ENCODE measurements at regions of chr10 and their contacts with region 1.

Region 1: DNA sequence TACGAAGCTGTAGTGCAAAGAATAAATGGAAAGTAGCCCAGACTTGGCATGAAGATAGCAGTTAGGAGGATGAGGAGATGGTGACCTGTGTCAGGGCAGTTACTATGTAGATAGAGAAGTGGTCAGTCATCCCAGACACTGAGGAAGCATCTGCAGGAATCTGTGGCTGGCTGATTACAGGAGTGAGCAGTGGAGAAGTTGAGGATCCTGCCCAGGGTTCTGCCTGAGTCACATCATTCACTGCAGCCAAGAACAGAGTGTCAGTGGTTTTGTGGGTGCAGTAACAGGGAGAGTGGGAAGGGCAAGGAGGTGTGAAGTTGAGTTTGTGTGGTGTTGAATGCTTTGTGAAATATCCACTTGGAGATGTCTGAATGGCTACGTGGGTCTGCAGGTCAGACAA is 676.4 kb upstream of the NRP1 start:
- DNase-seq: no peak
- H3K4me3 ChIP-seq: no peak overlapping the region
- H3K27ac ChIP-seq: no peak overlapping the region
- H3K4me1 ChIP-seq: no peaks in the 10 kb centered on the region
- H3K27me3 ChIP-seq: no peaks in the 10 kb centered on the region
- CTCF ChIP-seq: no peak
- POLR2A ChIP-seq: no peak

Region 2: GRCh38 chr10:33381451-33382242 is 629.2 kb before region 1 on chr10:
- intact Hi-C with region 1: no loop called
- DNase-seq: no peak
- H3K4me3 ChIP-seq: no peak overlapping the region
- H3K27ac ChIP-seq: no peak overlapping the region
- H3K4me1 ChIP-seq: no peaks in the 10 kb centered on the region
- H3K27me3 ChIP-seq: no peaks in the 10 kb centered on the region
- CTCF ChIP-seq: no peak
- POLR2A ChIP-seq: no peak

Region 3: DNA sequence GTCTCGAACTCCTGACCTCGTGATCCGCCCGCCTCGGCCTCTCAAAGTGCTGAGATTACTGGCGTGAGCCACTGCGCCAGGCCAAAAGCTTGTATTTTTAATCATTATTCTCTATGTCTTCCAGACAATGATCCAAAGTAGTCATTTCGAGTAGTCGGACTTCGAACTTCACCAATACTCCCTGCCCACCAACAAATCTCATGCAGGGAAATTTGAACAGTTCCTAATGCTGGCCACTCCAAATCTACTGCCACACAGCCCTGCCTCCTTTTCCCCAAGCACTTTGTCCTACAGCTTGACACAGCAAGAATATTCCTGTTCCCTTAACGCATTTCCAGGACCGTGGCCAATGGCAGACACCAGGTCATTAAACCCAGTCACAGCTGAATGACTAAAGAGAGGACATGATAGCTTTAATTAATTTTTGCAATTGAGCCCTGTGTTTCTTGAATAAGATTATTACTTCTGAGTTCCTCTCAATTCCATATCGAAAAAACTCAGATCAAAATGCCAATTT is 534.1 kb before region 1 on chr10:
- intact Hi-C with region 1: no loop called
- DNase-seq: no peak
- H3K4me3 ChIP-seq: no peak overlapping the region
- H3K27ac ChIP-seq: no peak overlapping the region
- H3K4me1 ChIP-seq: no peaks in the 10 kb centered on the region
- H3K27me3 ChIP-seq: no peaks in the 10 kb centered on the region
- CTCF ChIP-seq: no peak
- POLR2A ChIP-seq: no peak

Region 4: GRCh38 chr10:33653584-33654367 is 357.1 kb before region 1 on chr10:
- intact Hi-C with region 1: loop called (anchors 5 kb)
- DNase-seq: no peak
- H3K4me3 ChIP-seq: no peak overlapping the region
- H3K27ac ChIP-seq: no peak overlapping the region
- H3K4me1 ChIP-seq: no peaks in the 10 kb centered on the region
- H3K27me3 ChIP-seq: no peaks in the 10 kb centered on the region
- CTCF ChIP-seq: no peak
- POLR2A ChIP-seq: no peak

Region 5: GRCh38 chr10:34078745-34079470 is 68.0 kb after region 1 on chr10:
- intact Hi-C with region 1: no loop called
- DNase-seq: peak in 1 of 2 donors; percentile 30
- H3K4me3 ChIP-seq: no peak overlapping the region
- H3K27ac ChIP-seq: peak overlapping the region; percentile 41 to 80
- H3K4me1 ChIP-seq: no peaks in the 10 kb centered on the region
- H3K27me3 ChIP-seq: no peaks in the 10 kb centered on the region
- CTCF ChIP-seq: no peak
- POLR2A ChIP-seq: no peak

Region 6: GRCh38 chr10:34954168-34954567 is 943.3 kb after region 1 on chr10:
- intact Hi-C with region 1: no loop called
- DNase-seq: peak; percentile 91 to 94
- H3K4me3 ChIP-seq: no peak overlapping the region
- H3K27ac ChIP-seq: peak overlapping the region in 1 of 2 donors; percentile 88
- H3K4me1 ChIP-seq: peaks cover 0 to 13% of the 10 kb centered on the region in 2 donors
- H3K27me3 ChIP-seq: no peaks in the 10 kb centered on the region
- CTCF ChIP-seq: no peak
- POLR2A ChIP-seq: no peak